HEK293T (cell line): ENCODE measurements at regions of chr11 and their contacts with region 1.

Region 1: DNA sequence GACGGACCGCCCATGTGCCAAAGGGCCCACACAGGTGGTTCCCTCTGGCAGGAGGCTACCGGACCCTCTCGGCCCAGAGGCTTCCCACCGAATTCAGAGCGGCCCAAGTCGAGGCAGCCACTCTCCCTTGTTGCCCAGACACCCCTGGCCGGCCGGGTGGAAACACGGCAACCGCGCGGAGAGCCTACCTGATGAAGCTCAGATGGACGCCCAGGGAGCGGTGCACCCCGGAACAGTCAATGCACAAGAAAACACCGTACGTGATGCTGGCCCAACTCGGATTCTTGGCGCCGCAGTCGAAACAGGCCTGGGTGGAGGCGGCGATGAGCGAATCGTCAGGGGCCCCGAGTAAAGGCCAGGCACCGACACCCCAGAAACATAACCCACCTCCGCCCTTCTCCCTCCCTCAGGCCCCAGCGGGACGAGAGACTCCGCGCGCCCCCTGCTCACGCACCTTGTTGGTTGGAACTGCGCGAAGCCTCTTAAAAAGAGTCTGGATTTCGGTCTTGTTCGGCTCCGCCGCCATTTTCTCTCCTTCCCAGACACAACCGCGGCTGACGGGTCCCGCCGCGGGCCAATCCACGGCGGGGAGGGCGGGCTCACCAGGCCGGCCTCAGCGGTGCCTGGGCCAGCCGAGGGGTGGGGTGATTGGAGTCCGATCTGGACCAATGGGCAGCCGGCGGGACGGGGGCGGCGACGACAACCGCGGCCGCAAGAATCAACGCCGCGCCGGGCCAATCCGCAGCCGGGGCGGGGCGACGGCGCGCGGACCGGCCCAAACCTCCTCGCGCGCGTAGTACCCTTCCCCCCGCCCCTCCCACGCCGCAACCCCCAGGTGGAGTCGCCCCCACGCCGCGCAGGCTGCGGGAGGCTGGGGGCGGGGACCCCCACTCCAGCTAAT is at the start of gene ARFGAP2:
- DNase-seq: peak; percentile 99

Region 2: GRCh38 chr11:47259178-47259977 is 82.8 kb after region 1 on chr11:
- CTCF ChIA-PET with region 1: interaction called, 25 read pairs
- POLR2A ChIA-PET with region 1: no interaction called
- DNase-seq: peak; percentile 70